ENCODE measurements at regions of chr9 and their contacts with region 1.

Region 1: GRCh38 chr9:36023260-36024048 is 13.3 kb upstream of the RECK start:
- DNase-seq: peak; percentile 53 to 73
- H3K4me3 ChIP-seq: no peak overlapping the region
- H3K27ac ChIP-seq: no peak overlapping the region
- H3K4me1 ChIP-seq: no peaks in the 10 kb centered on the region
- H3K27me3 ChIP-seq: no peaks in the 10 kb centered on the region
- CTCF ChIP-seq: peak; percentile 74 to 75

Region 2: GRCh38 chr9:35891646-35892045 is 131.8 kb before region 1 on chr9:
- intact Hi-C with region 1: loop called (anchors 10 kb)
- DNase-seq: no peak
- H3K4me3 ChIP-seq: no peak overlapping the region
- H3K27ac ChIP-seq: no peak overlapping the region
- H3K4me1 ChIP-seq: no peaks in the 10 kb centered on the region
- H3K27me3 ChIP-seq: no peaks in the 10 kb centered on the region
- CTCF ChIP-seq: no peak

Region 3: GRCh38 chr9:35910613-35911359 is 112.7 kb before region 1 on chr9:
- intact Hi-C with region 1: no loop called
- DNase-seq: no peak
- H3K4me3 ChIP-seq: peak overlapping the region in 1 of 2 donors; percentile 6
- H3K27ac ChIP-seq: peak overlapping the region; percentile 88 to 98
- H3K4me1 ChIP-seq: peaks cover 11 to 92% (median 75%) of the 10 kb centered on the region in 4 donors
- H3K27me3 ChIP-seq: no peaks in the 10 kb centered on the region
- CTCF ChIP-seq: no peak

Region 4: GRCh38 chr9:35954942-35955546 is 68.4 kb before region 1 on chr9:
- intact Hi-C with region 1: loop called (anchors 5 kb)
- DNase-seq: peak in 1 of 2 donors; percentile 63
- H3K4me3 ChIP-seq: no peak overlapping the region
- H3K27ac ChIP-seq: no peak overlapping the region
- H3K4me1 ChIP-seq: no peaks in the 10 kb centered on the region
- H3K27me3 ChIP-seq: no peaks in the 10 kb centered on the region
- CTCF ChIP-seq: peak; percentile 79 to 91

Region 5: DNA sequence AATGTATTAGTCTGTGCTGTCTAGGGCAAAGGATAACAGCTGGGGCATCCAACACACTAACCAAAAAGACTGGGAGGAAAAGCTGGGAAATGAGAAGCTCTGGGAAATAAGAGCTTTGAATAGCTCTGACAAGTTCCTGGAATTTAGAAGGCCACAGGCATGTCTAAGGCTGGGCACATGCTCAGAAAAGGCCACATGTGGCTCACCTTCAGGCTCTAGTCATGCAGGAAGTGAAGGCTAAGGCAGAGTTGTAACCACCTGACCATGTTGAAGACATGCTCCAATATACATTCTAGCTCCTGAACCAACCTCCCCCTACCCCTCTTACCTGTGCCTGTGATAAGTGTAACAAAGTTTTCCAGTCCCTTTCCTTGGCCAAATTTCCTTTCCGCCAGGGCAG is 199.0 kb after region 1 on chr9:
- intact Hi-C with region 1: no loop called
- DNase-seq: no peak
- H3K4me3 ChIP-seq: no peak overlapping the region
- H3K27ac ChIP-seq: no peak overlapping the region
- H3K4me1 ChIP-seq: peaks cover 0 to 11% (median 0%) of the 10 kb centered on the region in 4 donors
- H3K27me3 ChIP-seq: no peaks in the 10 kb centered on the region
- CTCF ChIP-seq: no peak

Region 6: GRCh38 chr9:36632892-36633291 is 609.4 kb after region 1 on chr9:
- intact Hi-C with region 1: no loop called
- DNase-seq: no peak
- H3K4me3 ChIP-seq: no peak overlapping the region
- H3K27ac ChIP-seq: no peak overlapping the region
- H3K4me1 ChIP-seq: no peaks in the 10 kb centered on the region
- H3K27me3 ChIP-seq: no peaks in the 10 kb centered on the region
- CTCF ChIP-seq: peak; percentile 21 to 32

Measured in tibial artery (tissue), 4 donors.